ENCODE measurements at regions of chr17 and their contacts with region 1.

Region 1: DNA sequence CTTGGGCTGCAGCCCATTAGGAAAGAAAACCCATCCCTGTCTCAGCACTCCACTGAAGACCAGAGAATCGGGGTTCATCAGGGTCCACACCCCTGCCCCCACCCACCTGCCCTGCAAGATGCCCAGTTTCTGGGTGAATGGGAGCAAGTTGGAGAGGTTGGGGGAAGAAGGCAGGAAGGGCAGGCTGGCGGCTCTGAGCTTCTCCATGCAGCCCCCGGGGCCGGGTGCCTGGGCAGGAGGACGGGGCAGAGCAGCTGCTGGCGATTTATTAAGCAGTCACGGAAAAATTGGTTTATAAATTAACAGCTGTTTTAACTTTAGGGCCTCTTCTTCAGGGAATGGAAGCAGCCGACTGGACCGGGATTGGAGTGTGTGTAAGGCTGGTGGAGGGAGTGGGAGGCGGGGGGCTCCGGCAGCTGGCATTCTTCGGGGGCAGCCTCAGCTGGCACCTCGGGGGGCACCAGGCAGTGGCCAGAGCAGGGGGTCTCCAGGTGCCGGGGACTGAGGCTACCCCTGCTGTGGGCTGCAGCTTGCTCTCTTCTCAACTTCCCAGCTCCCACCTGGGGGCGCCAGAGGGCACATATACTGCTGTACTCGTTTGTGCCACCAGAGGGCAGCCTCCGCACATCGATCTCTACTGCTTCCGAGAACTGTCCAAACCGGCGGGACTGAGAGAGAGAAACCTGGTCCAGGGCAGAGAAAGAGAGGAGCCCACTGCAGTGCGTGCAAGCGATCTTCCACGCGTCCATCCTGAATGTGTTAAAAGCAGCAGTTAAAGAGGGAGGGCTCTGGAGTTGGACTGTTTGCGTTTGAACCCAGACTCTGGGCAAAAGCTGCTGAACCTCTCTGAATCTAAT is 5.0 kb upstream of the PPP1R1B start:
- DNase-seq: peak; percentile 92
- ATAC-seq: peak; percentile 77
- H3K4me3 Mint-ChIP-seq: peak overlapping the region; percentile 70
- H3K27ac Mint-ChIP-seq: peak overlapping the region; percentile 60
- H3K4me1 Mint-ChIP-seq: peaks cover 26% of the 10 kb centered on the region
- H3K27me3 Mint-ChIP-seq: peaks cover 16% of the 10 kb centered on the region
- CTCF ChIP-seq: peak; percentile 97

Region 2: GRCh38 chr17:39527220-39527813 is 94.4 kb before region 1 on chr17:
- CTCF ChIA-PET with region 1: interaction called, 10 read pairs
- POLR2A ChIA-PET with region 1: no interaction called
- intact Hi-C with region 1: loop called (anchors 1 kb)
- DNase-seq: no peak
- ATAC-seq: no peak
- H3K4me3 Mint-ChIP-seq: no peak overlapping the region
- H3K27ac Mint-ChIP-seq: no peak overlapping the region
- H3K4me1 Mint-ChIP-seq: no peaks in the 10 kb centered on the region
- H3K27me3 Mint-ChIP-seq: no peaks in the 10 kb centered on the region
- CTCF ChIP-seq: no peak

Region 3: GRCh38 chr17:39636927-39637736 is 15.4 kb after region 1 on chr17 and contains the start of gene STARD3:
- CTCF ChIA-PET with region 1: interaction called, 56 read pairs
- POLR2A ChIA-PET with region 1: interaction called, 4 read pairs
- intact Hi-C with region 1: loop called (anchors 1 kb)
- DNase-seq: peak; percentile 90
- ATAC-seq: peak; percentile 92
- H3K4me3 Mint-ChIP-seq: peak within 1 kb of the TSS; percentile 90
- H3K27ac Mint-ChIP-seq: peak within 1 kb of the TSS; percentile 86
- H3K4me1 Mint-ChIP-seq: peaks cover 63% of the 10 kb centered on the region
- H3K27me3 Mint-ChIP-seq: no peaks in the 10 kb centered on the region
- CTCF ChIP-seq: no peak
- total RNA-seq, gene STARD3: 51.8 and 58.2 TPM in 2 replicates

Region 4: DNA sequence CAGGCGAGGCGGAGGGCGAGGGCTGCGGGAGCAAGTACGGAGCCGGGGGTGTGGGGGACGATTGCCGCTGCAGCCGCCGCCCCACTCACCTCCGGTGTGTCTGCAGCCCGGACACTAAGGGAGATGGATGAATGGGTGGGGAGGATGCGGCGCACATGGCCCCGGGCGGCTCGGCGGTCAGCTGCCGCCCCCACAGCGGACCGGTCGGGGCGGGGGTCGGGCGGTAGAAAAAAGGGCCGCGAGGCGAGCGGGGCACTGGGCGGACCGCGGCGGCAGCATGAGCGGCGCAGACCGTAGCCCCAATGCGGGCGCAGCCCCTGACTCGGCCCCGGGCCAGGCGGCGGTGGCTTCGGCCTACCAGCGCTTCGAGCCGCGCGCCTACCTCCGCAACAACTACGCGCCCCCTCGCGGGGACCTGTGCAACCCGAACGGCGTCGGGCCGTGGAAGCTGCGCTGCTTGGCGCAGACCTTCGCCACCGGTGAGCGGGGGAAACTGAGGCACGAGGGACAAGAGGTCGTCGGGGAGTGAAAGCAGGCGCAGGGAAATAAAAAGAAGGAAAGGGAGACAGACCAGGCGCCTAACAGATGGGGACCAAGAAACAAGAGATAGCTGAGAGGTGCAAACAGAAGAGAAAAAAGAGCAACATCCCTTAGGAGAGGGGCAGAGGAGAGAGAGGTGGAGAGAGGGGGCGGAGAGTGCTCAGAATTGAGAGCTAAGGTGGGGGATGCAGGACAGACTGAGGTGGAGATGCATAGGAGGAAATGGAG is 46.6 kb after region 1 on chr17 and contains the start of gene PNMT:
- CTCF ChIA-PET with region 1: interaction called, 26 read pairs
- POLR2A ChIA-PET with region 1: no interaction called
- intact Hi-C with region 1: loop called (anchors 1 kb)
- DNase-seq: peak; percentile 70
- ATAC-seq: peak; percentile 83
- H3K4me3 Mint-ChIP-seq: peak within 1 kb of the TSS; percentile 71
- H3K27ac Mint-ChIP-seq: peak within 1 kb of the TSS; percentile 56
- H3K4me1 Mint-ChIP-seq: peaks cover 31% of the 10 kb centered on the region
- H3K27me3 Mint-ChIP-seq: peaks cover 12% of the 10 kb centered on the region
- CTCF ChIP-seq: peak; percentile 44
- total RNA-seq, gene PNMT: not detected in 2 replicates

Region 5: GRCh38 chr17:39794249-39794970 is 172.7 kb after region 1 on chr17:
- CTCF ChIA-PET with region 1: interaction called, 7 read pairs
- POLR2A ChIA-PET with region 1: interaction called, 11 read pairs
- intact Hi-C with region 1: no loop called
- DNase-seq: no peak
- ATAC-seq: peak; percentile 94
- H3K4me3 Mint-ChIP-seq: peak overlapping the region; percentile 66
- H3K27ac Mint-ChIP-seq: peak overlapping the region; percentile 93
- H3K4me1 Mint-ChIP-seq: peaks cover 85% of the 10 kb centered on the region
- H3K27me3 Mint-ChIP-seq: no peaks in the 10 kb centered on the region
- CTCF ChIP-seq: no peak

Region 6: DNA sequence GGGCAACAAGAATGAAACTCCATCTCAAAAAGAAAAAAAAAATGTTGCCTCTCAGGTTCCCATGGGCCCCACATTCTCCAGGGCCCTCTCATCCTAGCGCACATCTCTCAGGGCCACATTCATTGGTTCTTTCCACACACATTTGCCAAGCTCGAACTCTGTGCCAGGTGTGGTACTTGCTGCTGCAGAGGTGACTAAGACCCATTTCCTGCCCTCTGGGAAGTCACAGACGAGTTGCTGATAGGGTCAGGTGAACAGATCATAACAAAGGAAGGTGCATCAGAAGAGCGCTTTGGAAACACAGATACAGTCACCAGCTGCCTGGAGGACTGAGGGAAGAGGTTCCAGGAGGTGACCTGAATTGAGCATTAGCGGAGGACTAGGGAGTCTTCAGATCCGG is 342.1 kb after region 1 on chr17:
- CTCF ChIA-PET with region 1: interaction called, 3 read pairs
- POLR2A ChIA-PET with region 1: no interaction called
- intact Hi-C with region 1: loop called (anchors 1 kb)
- DNase-seq: no peak
- ATAC-seq: no peak
- H3K4me3 Mint-ChIP-seq: no peak overlapping the region
- H3K27ac Mint-ChIP-seq: no peak overlapping the region
- H3K4me1 Mint-ChIP-seq: peaks cover 13% of the 10 kb centered on the region
- H3K27me3 Mint-ChIP-seq: peaks cover 11% of the 10 kb centered on the region
- CTCF ChIP-seq: no peak

Region 7: GRCh38 chr17:40075201-40075941 is 453.6 kb after region 1 on chr17:
- CTCF ChIA-PET with region 1: no interaction called
- POLR2A ChIA-PET with region 1: no interaction called
- intact Hi-C with region 1: loop called (anchors 5 kb)
- DNase-seq: peak; percentile 52
- ATAC-seq: peak; percentile 96
- H3K4me3 Mint-ChIP-seq: no peak overlapping the region
- H3K27ac Mint-ChIP-seq: peak overlapping the region; percentile 16
- H3K4me1 Mint-ChIP-seq: peaks cover 29% of the 10 kb centered on the region
- H3K27me3 Mint-ChIP-seq: no peaks in the 10 kb centered on the region
- CTCF ChIP-seq: peak; percentile 61

Region 8: DNA sequence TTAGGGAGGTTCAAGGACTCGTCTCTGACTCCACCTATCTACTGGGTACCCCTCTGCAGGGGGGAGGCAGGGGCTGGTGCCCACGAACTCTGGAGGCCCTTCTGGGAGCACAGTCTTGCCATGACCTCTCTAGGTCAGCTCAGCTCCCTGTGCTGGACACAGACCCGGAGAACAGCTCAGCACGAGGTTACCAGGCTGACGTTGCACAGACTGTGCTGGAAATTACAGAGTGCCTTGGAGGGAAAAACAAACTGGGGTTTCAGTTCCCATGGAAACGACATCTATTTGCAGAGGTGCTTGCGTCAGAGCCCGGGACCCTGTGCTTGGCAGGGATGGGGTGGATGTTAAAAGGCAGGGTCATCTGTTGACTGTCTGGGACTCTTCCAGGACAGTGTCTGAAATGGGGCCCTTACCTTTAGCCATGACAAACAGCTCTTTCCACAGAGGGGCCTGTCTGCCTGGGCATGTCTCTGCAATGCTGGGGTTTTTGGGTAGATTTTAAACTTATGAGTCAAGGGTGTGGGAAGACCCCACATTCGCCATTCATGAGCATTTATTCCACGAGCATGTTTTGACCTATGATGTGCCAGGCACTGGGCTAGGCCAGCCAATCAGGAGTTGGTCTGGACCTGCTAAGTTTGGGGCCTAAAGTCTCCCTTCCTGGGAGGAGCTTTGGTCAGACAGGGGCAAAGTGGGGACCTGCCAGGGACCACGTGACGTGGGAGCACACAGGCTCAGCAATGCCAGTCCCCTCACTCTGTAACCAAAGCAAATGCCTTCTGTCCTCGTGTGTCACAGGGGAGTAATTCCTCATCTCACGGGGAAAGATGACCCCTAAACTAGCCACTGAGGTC is 921.0 kb after region 1 on chr17:
- CTCF ChIA-PET with region 1: no interaction called
- POLR2A ChIA-PET with region 1: no interaction called
- intact Hi-C with region 1: no loop called
- DNase-seq: peak; percentile 40
- ATAC-seq: peak; percentile 63
- H3K4me3 Mint-ChIP-seq: peak overlapping the region; percentile 68
- H3K27ac Mint-ChIP-seq: peak overlapping the region; percentile 93
- H3K4me1 Mint-ChIP-seq: peaks cover 77% of the 10 kb centered on the region
- H3K27me3 Mint-ChIP-seq: no peaks in the 10 kb centered on the region
- CTCF ChIP-seq: no peak

Measured in activated B cell treated with CpG ODN at 0.5 μM for 24 hours (primary cell).